Vagina (tissue), 2 donors: ENCODE measurements at regions of chr13 and their contacts with region 1.

Region 1: GRCh38 chr13:21986602-21987001 is 315.7 kb downstream of the FGF9 start:
- DNase-seq: peak in 1 of 2 donors; percentile 97
- H3K4me3 ChIP-seq: no peak overlapping the region
- H3K27ac ChIP-seq: peak overlapping the region; percentile 62
- H3K4me1 ChIP-seq: no peaks in the 10 kb centered on the region
- H3K27me3 ChIP-seq: no peaks in the 10 kb centered on the region
- CTCF ChIP-seq: no peak
- POLR2A ChIP-seq: no peak

Region 2: GRCh38 chr13:21971662-21972621 is 14.7 kb before region 1 on chr13:
- intact Hi-C with region 1: loop called (anchors 1 kb)
- DNase-seq: no peak
- H3K4me3 ChIP-seq: no peak overlapping the region
- H3K27ac ChIP-seq: peak overlapping the region; percentile 17
- H3K4me1 ChIP-seq: no peaks in the 10 kb centered on the region
- H3K27me3 ChIP-seq: no peaks in the 10 kb centered on the region
- CTCF ChIP-seq: no peak
- POLR2A ChIP-seq: no peak

Region 3: DNA sequence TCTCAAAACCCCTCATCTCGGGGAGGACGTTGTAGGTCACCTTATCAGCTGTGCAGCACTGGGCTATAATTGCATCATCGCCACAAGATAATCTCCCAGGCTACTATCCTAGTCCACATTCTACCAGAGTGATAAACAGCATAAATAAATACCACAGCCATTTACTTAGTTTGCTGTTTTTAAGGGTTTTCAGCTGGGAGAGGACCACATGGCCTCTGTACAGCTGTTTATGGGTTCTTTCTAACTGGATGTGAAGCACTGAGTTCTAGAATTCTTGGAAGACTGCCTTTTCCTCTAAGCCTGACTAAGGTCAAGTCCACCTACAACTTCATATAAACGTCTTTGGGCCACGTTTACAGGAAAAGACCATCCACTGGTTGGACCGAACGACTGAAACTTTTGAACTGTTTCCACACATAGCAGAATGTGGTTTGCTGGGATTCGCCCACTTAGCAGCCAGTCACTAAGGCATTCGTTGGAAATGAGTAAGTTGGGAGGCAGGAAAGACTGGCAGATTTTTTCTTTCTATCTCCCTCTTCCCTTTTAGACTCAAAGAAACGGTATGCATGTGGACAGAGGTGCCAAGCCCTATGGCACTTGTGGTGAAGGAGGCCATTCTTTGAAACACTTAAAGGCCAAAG is 441.7 kb after region 1 on chr13:
- intact Hi-C with region 1: no loop called
- DNase-seq: no peak
- H3K4me3 ChIP-seq: no peak overlapping the region
- H3K27ac ChIP-seq: peak overlapping the region; percentile 13
- H3K4me1 ChIP-seq: no peaks in the 10 kb centered on the region
- H3K27me3 ChIP-seq: no peaks in the 10 kb centered on the region
- CTCF ChIP-seq: no peak
- POLR2A ChIP-seq: no peak